GM12878 (cell line): ENCODE measurements at regions of chr6 and their contacts with region 1.

Region 1: GRCh38 chr6:122839477-122839876 is 50.4 kb downstream of the SMPDL3A start:
- DNase-seq: no peak
- ATAC-seq: peak; percentile 93
- H3K4me3 ChIP-seq: no peak overlapping the region
- H3K27ac ChIP-seq: no peak overlapping the region
- H3K4me1 ChIP-seq: no peaks in the 10 kb centered on the region
- H3K27me3 ChIP-seq: peaks cover 0 to 3% of the 10 kb centered on the region in 2 experiments; a peak in 1 of 4 replicates
- CTCF ChIP-seq: peak; percentile 59 to 68 (median 64); a peak in 5 of 6 replicates
- EP300 ChIP-seq: no peak
- POLR2A ChIP-seq: no peak
- RAD21 ChIP-seq: peak; percentile 58

Region 2: DNA sequence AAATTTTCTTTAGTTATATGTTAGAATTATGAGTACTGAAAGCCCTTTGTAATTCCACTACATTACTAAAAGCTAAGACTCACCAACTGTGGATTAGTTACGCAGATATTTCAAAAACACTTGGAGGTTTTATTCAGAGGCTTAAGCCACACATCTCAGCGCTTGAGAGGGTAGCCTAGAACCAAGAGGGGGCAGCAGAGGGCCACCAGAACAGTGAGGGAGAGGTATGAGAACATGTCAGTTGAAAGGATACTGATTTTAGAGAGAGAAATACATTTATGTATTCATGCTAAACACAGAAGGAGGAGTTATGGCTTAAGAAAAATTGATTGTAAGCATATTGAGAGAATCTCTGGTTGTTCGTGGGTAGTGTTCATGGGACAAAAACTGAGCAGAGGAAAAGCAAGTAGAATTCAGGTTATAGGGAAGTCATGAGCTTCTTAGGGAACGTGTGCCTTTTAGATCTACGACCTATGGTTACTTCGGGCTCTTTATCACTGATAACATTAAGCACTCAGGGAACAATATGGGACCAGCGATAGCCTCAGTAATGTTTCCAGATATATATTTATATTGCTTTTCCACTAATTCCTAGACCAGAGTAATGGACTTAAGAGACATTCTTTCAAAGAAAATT is 347.4 kb before region 1 on chr6:
- CTCF ChIA-PET with region 1: interaction called, 64 read pairs
- POLR2A ChIA-PET with region 1: no interaction called
- RAD21 ChIA-PET with region 1: interaction called, 15 read pairs
- SMC1A ChIA-PET with region 1: interaction called, 18 read pairs
- in situ Hi-C with region 1: no loop called
- intact Hi-C with region 1: no loop called
- DNase-seq: no peak
- ATAC-seq: peak; percentile 100
- H3K4me3 ChIP-seq: no peak overlapping the region
- H3K27ac ChIP-seq: no peak overlapping the region
- H3K4me1 ChIP-seq: no peaks in the 10 kb centered on the region
- H3K27me3 ChIP-seq: no peaks in the 10 kb centered on the region
- CTCF ChIP-seq: peak; percentile 82 to 92 (median 87)
- EP300 ChIP-seq: no peak
- POLR2A ChIP-seq: no peak
- RAD21 ChIP-seq: peak; percentile 86

Region 3: DNA sequence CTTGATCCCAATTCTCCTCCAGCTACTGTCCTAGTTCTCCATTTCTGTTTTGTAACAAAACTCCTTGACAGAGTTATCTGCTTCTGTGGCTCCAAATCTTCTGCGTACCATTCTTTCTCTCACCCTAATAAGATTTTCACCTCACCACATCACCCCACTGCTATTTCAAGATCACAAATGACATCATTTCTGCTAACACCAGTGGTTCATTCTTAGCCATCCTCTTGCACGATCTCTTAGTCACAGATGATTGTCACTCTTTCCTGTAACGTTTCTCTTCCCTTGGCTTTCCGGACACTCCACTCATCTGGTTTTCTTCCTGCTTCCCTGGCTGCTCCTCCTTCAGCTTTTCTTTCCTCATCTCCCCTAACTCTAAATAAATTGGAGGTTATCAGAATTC is 116.7 kb before region 1 on chr6:
- CTCF ChIA-PET with region 1: interaction called, 640 read pairs
- POLR2A ChIA-PET with region 1: interaction called, 3 read pairs
- RAD21 ChIA-PET with region 1: interaction called, 184 read pairs
- SMC1A ChIA-PET with region 1: interaction called, 237 read pairs
- in situ Hi-C with region 1: no loop called
- intact Hi-C with region 1: no loop called
- DNase-seq: no peak
- ATAC-seq: peak; percentile 63
- H3K4me3 ChIP-seq: no peak overlapping the region
- H3K27ac ChIP-seq: no peak overlapping the region
- H3K4me1 ChIP-seq: no peaks in the 10 kb centered on the region
- H3K27me3 ChIP-seq: no peaks in the 10 kb centered on the region; a peak in 1 of 4 replicates
- CTCF ChIP-seq: no peak
- EP300 ChIP-seq: no peak
- POLR2A ChIP-seq: no peak
- RAD21 ChIP-seq: no peak

Region 4: GRCh38 chr6:122758927-122759334 is 80.5 kb before region 1 on chr6:
- CTCF ChIA-PET with region 1: interaction called, 67 read pairs
- POLR2A ChIA-PET with region 1: no interaction called
- RAD21 ChIA-PET with region 1: interaction called, 21 read pairs
- SMC1A ChIA-PET with region 1: interaction called, 33 read pairs
- in situ Hi-C with region 1: no loop called
- intact Hi-C with region 1: no loop called
- DNase-seq: no peak
- ATAC-seq: peak; percentile 100
- H3K4me3 ChIP-seq: no peak overlapping the region
- H3K27ac ChIP-seq: no peak overlapping the region
- H3K4me1 ChIP-seq: no peaks in the 10 kb centered on the region
- H3K27me3 ChIP-seq: no peaks in the 10 kb centered on the region
- CTCF ChIP-seq: no peak
- EP300 ChIP-seq: no peak
- POLR2A ChIP-seq: no peak
- RAD21 ChIP-seq: no peak

Region 5: GRCh38 chr6:122803171-122803661 is 36.3 kb before region 1 on chr6:
- CTCF ChIA-PET with region 1: interaction called, 59 read pairs
- POLR2A ChIA-PET with region 1: interaction called, 3 read pairs
- RAD21 ChIA-PET with region 1: interaction called, 23 read pairs
- SMC1A ChIA-PET with region 1: interaction called, 14 read pairs
- in situ Hi-C with region 1: no loop called
- intact Hi-C with region 1: no loop called
- DNase-seq: no peak
- ATAC-seq: no peak
- H3K4me3 ChIP-seq: no peak overlapping the region
- H3K27ac ChIP-seq: no peak overlapping the region
- H3K4me1 ChIP-seq: no peaks in the 10 kb centered on the region
- H3K27me3 ChIP-seq: no peaks in the 10 kb centered on the region
- CTCF ChIP-seq: no peak
- EP300 ChIP-seq: no peak
- POLR2A ChIP-seq: no peak
- RAD21 ChIP-seq: no peak

Region 6: GRCh38 chr6:122853259-122853995 is 13.9 kb after region 1 on chr6:
- CTCF ChIA-PET with region 1: interaction called, 22 read pairs
- POLR2A ChIA-PET with region 1: no interaction called
- RAD21 ChIA-PET with region 1: interaction called, 4 read pairs
- SMC1A ChIA-PET with region 1: interaction called, 13 read pairs
- in situ Hi-C with region 1: no loop called
- intact Hi-C with region 1: no loop called
- DNase-seq: peak; percentile 40
- ATAC-seq: peak; percentile 95
- H3K4me3 ChIP-seq: no peak overlapping the region
- H3K27ac ChIP-seq: peak overlapping the region; percentile 36; the same call in 1 of the 2 replicates
- H3K4me1 ChIP-seq: peaks cover 3% of the 10 kb centered on the region; the same call in 1 of the 2 replicates
- H3K27me3 ChIP-seq: no peaks in the 10 kb centered on the region
- CTCF ChIP-seq: no peak
- EP300 ChIP-seq: peak in 1 of 2 experiments; percentile 71; a peak in 2 of 4 replicates
- POLR2A ChIP-seq: no peak
- RAD21 ChIP-seq: no peak

Region 7: DNA sequence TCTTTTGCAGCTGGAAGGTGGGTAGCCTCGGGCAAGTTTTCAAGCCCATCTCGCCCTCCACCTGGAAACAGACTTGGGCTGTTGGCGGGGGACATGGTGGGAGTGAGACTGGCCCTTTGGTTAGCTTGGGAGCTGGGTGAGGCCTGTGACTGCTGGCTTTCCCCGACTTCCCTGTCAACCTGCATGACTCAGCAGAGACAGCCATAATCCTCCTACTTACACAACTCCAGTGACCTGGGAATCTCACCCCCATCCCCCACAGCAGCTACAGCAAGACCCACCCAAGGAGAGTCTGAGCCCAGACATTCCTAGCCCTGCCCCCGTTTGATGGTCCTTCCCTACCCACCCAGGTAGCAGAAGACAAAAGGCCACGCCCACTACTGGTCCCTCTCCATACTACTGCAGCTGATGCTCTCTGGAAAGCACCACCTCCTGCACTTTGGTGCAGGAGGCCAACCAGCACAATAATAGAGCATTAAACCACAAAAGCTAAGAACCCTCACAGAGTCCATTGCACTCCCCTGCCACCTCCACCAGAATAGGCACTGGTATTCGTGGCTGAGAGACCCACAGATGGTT is 608.9 kb after region 1 on chr6:
- CTCF ChIA-PET with region 1: no interaction called
- POLR2A ChIA-PET with region 1: no interaction called
- RAD21 ChIA-PET with region 1: no interaction called
- SMC1A ChIA-PET with region 1: no interaction called
- in situ Hi-C with region 1: no loop called
- intact Hi-C with region 1: no loop called
- DNase-seq: no peak
- ATAC-seq: no peak
- H3K4me3 ChIP-seq: no peak overlapping the region
- H3K27ac ChIP-seq: no peak overlapping the region
- H3K4me1 ChIP-seq: no peaks in the 10 kb centered on the region
- H3K27me3 ChIP-seq: no peaks in the 10 kb centered on the region
- CTCF ChIP-seq: no peak
- EP300 ChIP-seq: no peak
- POLR2A ChIP-seq: no peak
- RAD21 ChIP-seq: no peak